CD4-positive, alpha-beta T cell (primary cell): ENCODE measurements at regions of chr1 and their contacts with region 1.

Region 1: DNA sequence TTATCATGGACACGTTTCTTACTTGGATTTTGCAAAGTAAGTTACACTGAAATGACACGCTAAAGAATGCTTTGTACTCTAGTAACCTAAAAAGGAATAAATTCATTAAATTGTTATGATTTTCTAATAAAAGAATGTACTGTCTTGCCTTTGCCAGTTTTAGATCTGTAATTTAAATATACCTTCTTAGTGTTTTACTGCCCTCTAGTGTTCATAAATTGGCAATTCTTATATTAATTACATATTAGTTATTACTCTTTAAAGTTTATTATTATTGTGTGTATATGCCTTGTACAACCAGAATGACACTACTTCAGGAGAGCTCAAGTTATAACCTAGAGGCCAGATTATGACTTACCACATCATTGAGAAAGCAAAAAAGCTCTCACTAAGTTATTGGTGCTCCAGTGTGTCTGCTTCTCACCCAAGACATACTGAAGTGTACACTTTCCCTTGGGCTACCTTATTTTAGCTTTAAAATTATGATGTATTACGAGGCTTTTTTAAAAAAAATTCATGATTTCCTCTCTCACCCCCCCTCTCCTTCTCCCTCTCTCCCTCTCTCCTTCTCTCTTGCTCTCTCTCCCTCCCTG is 169.9 kb downstream of the HS2ST1 start:
- DNase-seq: peak in 3 of 14 experiments; percentile 46 to 53 (median 53)
- ATAC-seq: peak; percentile 39
- H3K4me3 ChIP-seq: no peak overlapping the region
- H3K4me3 Mint-ChIP-seq: no peak overlapping the region
- H3K27ac ChIP-seq: no peak overlapping the region
- H3K27ac Mint-ChIP-seq: peak overlapping the region; percentile 17
- H3K4me1 ChIP-seq: no peaks in the 10 kb centered on the region
- H3K4me1 Mint-ChIP-seq: no peaks in the 10 kb centered on the region
- H3K27me3 ChIP-seq: no peaks in the 10 kb centered on the region
- H3K27me3 Mint-ChIP-seq: no peaks in the 10 kb centered on the region
- CTCF ChIP-seq: peak; percentile 79

Region 2: DNA sequence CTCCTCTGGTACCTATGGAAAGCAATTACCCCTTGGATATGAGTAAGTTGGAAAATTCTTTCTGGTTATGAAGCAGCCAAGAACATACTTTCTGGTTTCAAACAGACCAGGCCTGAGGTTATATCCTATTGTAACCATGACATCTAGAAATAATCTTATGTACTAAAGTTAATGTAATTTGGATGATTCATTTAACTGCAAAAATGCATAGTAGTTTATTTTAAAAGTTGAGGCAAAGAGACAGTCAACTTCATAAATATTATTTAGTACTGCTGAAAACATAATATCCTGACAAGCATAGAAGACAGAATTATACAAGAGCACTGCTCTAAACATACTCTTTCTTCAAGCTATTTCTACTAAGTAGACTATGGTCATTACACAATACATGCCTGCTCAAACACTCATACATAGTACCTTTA is 713.7 kb before region 1 on chr1:
- CTCF ChIA-PET with region 1: no interaction called
- POLR2A ChIA-PET with region 1: no interaction called
- intact Hi-C with region 1: loop called in 1 of 2 experiments (anchors 10 kb)
- DNase-seq: no peak
- ATAC-seq: no peak
- H3K4me3 ChIP-seq: no peak overlapping the region
- H3K4me3 Mint-ChIP-seq: no peak overlapping the region
- H3K27ac ChIP-seq: no peak overlapping the region
- H3K27ac Mint-ChIP-seq: no peak overlapping the region
- H3K4me1 ChIP-seq: no peaks in the 10 kb centered on the region
- H3K4me1 Mint-ChIP-seq: no peaks in the 10 kb centered on the region
- H3K27me3 ChIP-seq: no peaks in the 10 kb centered on the region
- H3K27me3 Mint-ChIP-seq: no peaks in the 10 kb centered on the region
- CTCF ChIP-seq: no peak

Region 3: GRCh38 chr1:86470859-86471258 is 613.5 kb before region 1 on chr1:
- CTCF ChIA-PET with region 1: no interaction called
- POLR2A ChIA-PET with region 1: no interaction called
- intact Hi-C with region 1: loop called (anchors 10 kb)
- DNase-seq: no peak
- ATAC-seq: no peak
- H3K4me3 ChIP-seq: no peak overlapping the region
- H3K4me3 Mint-ChIP-seq: no peak overlapping the region
- H3K27ac ChIP-seq: no peak overlapping the region
- H3K27ac Mint-ChIP-seq: no peak overlapping the region
- H3K4me1 ChIP-seq: no peaks in the 10 kb centered on the region
- H3K4me1 Mint-ChIP-seq: no peaks in the 10 kb centered on the region
- H3K27me3 ChIP-seq: peaks cover 0 to 5% of the 10 kb centered on the region in 2 experiments
- H3K27me3 Mint-ChIP-seq: peaks cover 8% of the 10 kb centered on the region
- CTCF ChIP-seq: no peak

Region 4: DNA sequence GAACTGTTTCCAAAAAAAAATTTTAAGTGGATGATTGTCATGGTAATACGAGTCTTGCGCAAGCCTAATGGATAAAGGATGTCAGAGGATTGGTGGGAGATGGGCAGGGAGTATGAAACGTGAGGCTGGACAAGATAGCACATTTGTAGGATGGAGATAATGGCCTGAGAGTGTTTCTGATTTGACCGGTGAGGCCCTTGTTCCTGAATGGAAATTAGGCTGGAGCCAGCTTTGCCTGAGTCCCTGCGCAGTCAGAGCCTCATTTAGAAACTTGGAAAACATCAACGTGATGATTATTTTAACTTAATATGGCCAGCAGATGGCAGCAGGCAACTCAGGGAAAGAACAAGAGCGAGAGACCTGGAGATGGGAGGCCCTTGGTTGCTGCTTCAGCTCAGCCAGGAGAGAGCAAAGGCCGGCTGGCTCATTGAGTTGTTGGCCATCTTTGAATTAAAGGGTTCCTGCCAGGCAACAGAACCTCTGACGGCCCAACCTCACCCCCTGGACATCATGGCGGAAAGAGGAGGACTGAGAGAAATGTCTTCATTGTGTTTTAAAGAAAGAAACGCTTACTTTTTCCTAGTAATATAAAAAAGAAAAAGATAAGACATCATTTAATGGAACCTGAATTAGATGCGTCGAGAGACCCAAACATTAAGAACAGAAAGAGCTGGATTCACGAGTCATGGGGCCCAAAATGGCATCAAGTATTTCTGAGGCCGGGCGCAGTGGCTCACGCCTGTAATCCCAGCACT is 250.7 kb before region 1 on chr1:
- CTCF ChIA-PET with region 1: interaction called, 10 read pairs
- POLR2A ChIA-PET with region 1: interaction called, 4 read pairs
- intact Hi-C with region 1: loop called (anchors 1 kb)
- DNase-seq: peak; percentile 26 to 80 (median 42)
- ATAC-seq: peak; percentile 72
- H3K4me3 ChIP-seq: no peak overlapping the region
- H3K4me3 Mint-ChIP-seq: no peak overlapping the region
- H3K27ac ChIP-seq: no peak overlapping the region
- H3K27ac Mint-ChIP-seq: no peak overlapping the region
- H3K4me1 ChIP-seq: peaks cover 3% of the 10 kb centered on the region
- H3K4me1 Mint-ChIP-seq: no peaks in the 10 kb centered on the region
- H3K27me3 ChIP-seq: no peaks in the 10 kb centered on the region
- H3K27me3 Mint-ChIP-seq: peaks cover 4% of the 10 kb centered on the region
- CTCF ChIP-seq: peak; percentile 75

Region 5: GRCh38 chr1:86965012-86965826 is 119.1 kb before region 1 on chr1:
- CTCF ChIA-PET with region 1: no interaction called
- POLR2A ChIA-PET with region 1: no interaction called
- intact Hi-C with region 1: loop called in 1 of 2 experiments (anchors 2 kb)
- DNase-seq: peak in 5 of 14 experiments; percentile 1 to 50 (median 29)
- ATAC-seq: no peak
- H3K4me3 ChIP-seq: no peak overlapping the region
- H3K4me3 Mint-ChIP-seq: no peak overlapping the region
- H3K27ac ChIP-seq: no peak overlapping the region
- H3K27ac Mint-ChIP-seq: no peak overlapping the region
- H3K4me1 ChIP-seq: no peaks in the 10 kb centered on the region
- H3K4me1 Mint-ChIP-seq: no peaks in the 10 kb centered on the region
- H3K27me3 ChIP-seq: no peaks in the 10 kb centered on the region
- H3K27me3 Mint-ChIP-seq: no peaks in the 10 kb centered on the region
- CTCF ChIP-seq: peak; percentile 61

Region 6: DNA sequence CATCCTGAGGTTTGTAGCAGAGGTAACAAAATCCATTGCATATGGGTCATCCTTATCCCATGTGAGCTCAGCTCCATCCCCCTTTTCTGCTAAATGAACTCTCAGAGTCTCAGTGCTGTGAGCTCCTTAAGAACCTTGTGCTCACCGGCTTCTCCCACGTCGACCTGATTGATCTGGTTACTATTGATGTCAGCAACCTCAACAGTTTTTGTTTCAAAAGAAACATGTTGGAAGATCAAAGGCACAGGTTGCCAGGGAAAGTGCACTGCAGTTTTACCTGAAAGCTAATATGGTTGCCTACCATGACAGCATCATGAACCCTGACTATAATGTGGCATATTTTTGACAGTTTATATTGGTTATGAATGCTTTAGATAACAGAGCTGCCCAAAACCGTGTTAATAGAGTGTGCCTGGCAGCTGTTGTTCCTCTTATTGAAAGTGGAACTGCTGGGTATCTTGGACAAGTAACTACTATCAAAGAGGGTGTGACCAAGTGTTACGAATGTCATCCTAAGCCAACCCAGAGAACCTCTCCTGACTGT is 38.5 kb before region 1 on chr1:
- CTCF ChIA-PET with region 1: no interaction called
- POLR2A ChIA-PET with region 1: no interaction called
- intact Hi-C with region 1: loop called in 1 of 2 experiments (anchors 1 kb)
- DNase-seq: peak in 12 of 14 experiments; percentile 5 to 86 (median 32)
- ATAC-seq: peak; percentile 69
- H3K4me3 ChIP-seq: no peak overlapping the region
- H3K4me3 Mint-ChIP-seq: peak overlapping the region; percentile 67
- H3K27ac ChIP-seq: peak overlapping the region in 1 of 2 donors; percentile 15
- H3K27ac Mint-ChIP-seq: peak overlapping the region; percentile 73
- H3K4me1 ChIP-seq: peaks cover 13% of the 10 kb centered on the region
- H3K4me1 Mint-ChIP-seq: peaks cover 50% of the 10 kb centered on the region
- H3K27me3 ChIP-seq: no peaks in the 10 kb centered on the region
- H3K27me3 Mint-ChIP-seq: no peaks in the 10 kb centered on the region
- CTCF ChIP-seq: no peak

Region 7: DNA sequence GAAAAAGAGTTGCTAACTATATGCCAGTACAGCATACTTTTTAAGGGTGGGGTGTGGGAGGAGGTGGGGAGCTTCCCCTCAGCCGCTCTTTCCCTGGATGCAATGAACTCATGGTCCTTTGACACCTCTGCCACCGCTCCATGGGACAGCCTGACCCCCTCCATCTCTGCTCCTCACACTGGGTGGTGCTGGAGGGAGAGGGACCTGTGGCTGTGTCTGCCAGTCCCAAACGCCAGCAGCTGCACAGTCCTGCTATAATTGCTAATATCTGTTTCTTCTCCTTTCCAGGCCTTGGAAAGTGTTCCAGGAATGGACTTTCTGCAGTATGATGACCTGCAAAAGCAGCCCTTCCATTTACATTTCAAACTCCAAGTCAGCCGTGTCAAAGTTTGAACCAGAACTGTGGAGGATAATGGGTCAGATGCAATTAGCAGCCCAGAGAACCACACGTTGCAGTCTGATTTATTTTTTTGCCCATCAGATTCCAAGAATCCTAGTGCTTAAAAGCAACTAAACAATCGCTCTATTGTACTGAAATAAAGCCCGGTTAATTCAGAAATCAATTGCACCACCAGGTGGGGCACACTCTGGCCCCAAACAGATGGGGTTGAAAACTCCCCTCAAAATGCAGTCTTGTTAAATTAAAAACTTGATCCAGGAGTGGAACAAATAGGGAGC is 83.6 kb after region 1 on chr1:
- CTCF ChIA-PET with region 1: no interaction called
- POLR2A ChIA-PET with region 1: no interaction called
- intact Hi-C with region 1: no loop called
- DNase-seq: no peak
- ATAC-seq: no peak
- H3K4me3 ChIP-seq: no peak overlapping the region
- H3K4me3 Mint-ChIP-seq: no peak overlapping the region
- H3K27ac ChIP-seq: no peak overlapping the region
- H3K27ac Mint-ChIP-seq: no peak overlapping the region
- H3K4me1 ChIP-seq: no peaks in the 10 kb centered on the region
- H3K4me1 Mint-ChIP-seq: no peaks in the 10 kb centered on the region
- H3K27me3 ChIP-seq: peaks cover 0 to 11% of the 10 kb centered on the region in 2 experiments
- H3K27me3 Mint-ChIP-seq: peaks cover 28% of the 10 kb centered on the region
- CTCF ChIP-seq: no peak